Naive thymus-derived CD4-positive, alpha-beta T cell (primary cell): ENCODE measurements at regions of chr14 and their contacts with region 1.

Region 1: DNA sequence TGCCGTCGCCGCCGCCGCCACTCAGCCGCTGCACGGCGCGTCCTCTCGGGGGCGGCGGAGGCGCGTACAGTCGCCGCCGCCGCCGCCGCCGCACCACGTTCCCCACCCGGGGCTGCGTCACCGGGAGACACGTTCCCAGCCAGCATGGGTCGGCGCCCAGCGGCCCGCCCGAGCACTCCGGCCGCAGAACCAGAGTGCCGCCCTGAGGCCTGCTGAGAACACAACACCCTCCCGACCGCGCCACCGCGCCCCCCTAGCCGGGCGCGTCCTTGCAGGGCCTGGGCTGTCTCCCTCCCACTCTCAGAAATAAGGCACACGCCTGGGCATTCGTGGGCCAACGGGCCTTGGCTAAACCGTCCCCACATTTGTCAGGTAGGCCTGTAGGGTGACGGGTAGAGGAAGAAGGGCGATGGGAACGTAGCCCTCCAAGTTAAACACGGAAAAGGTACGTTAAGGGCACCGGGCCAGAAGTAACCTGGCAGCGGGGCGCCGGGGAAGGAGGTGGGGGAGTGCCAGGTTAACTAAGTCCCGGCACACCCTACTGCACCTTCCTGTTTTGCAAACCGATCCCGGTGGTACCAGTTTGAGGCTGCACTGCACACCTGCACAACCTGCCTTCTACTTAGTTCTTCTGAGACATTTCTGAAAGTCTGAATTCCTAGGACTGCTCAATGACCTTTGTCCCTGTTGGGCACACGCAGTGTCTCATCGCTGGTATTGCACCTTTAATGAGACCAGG is at the start of gene MAP4K5:
- DNase-seq: peak; percentile 76 to 90 (median 85)
- ATAC-seq: peak; percentile 97
- H3K4me3 ChIP-seq: peak within 1 kb of the TSS; percentile 50
- H3K4me3 Mint-ChIP-seq: peak within 1 kb of the TSS; percentile 82 to 93 (median 91)
- H3K27ac ChIP-seq: peak within 1 kb of the TSS; percentile 78
- H3K27ac Mint-ChIP-seq: peak within 1 kb of the TSS; percentile 64 to 96 (median 89)
- H3K4me1 ChIP-seq: peaks cover 16 to 24% of the 10 kb centered on the region in 2 donors
- H3K4me1 Mint-ChIP-seq: peaks cover 36 to 59% (median 46%) of the 10 kb centered on the region in 7 donors
- H3K27me3 ChIP-seq: no peaks in the 10 kb centered on the region
- H3K27me3 Mint-ChIP-seq: peaks cover 0 to 21% (median 0%) of the 10 kb centered on the region in 5 donors
- total RNA-seq, gene MAP4K5: 30.0 to 47.5 (median 35.1) TPM

Region 2: GRCh38 chr14:49585803-49586672 is 946.6 kb before region 1 on chr14 and contains the start of gene RPS29:
- CTCF ChIA-PET with region 1: no interaction called
- POLR2A ChIA-PET with region 1: no interaction called
- intact Hi-C with region 1: loop called (anchors 5 kb)
- DNase-seq: peak; percentile 97 to 99 (median 99)
- ATAC-seq: peak; percentile 91
- H3K4me3 ChIP-seq: peak within 1 kb of the TSS; percentile 98
- H3K4me3 Mint-ChIP-seq: peak within 1 kb of the TSS; percentile 87 to 100 (median 94)
- H3K27ac ChIP-seq: peak within 1 kb of the TSS; percentile 84
- H3K27ac Mint-ChIP-seq: peak within 1 kb of the TSS; percentile 90 to 100 (median 98)
- H3K4me1 ChIP-seq: peaks cover 19 to 21% of the 10 kb centered on the region in 2 donors
- H3K4me1 Mint-ChIP-seq: peaks cover 33 to 60% (median 46%) of the 10 kb centered on the region in 7 donors
- H3K27me3 ChIP-seq: no peaks in the 10 kb centered on the region
- H3K27me3 Mint-ChIP-seq: peaks cover 0 to 5% (median 0%) of the 10 kb centered on the region in 5 donors
- total RNA-seq, gene RPS29: 2,254 to 4,907 (median 2,729) TPM

Region 3: GRCh38 chr14:49828640-49829039 is 704.0 kb before region 1 on chr14:
- CTCF ChIA-PET with region 1: no interaction called
- POLR2A ChIA-PET with region 1: no interaction called
- intact Hi-C with region 1: loop called in 1 of 2 experiments (anchors 1 kb)
- DNase-seq: no peak
- ATAC-seq: no peak
- H3K4me3 ChIP-seq: no peak overlapping the region
- H3K4me3 Mint-ChIP-seq: no peak overlapping the region
- H3K27ac ChIP-seq: no peak overlapping the region
- H3K27ac Mint-ChIP-seq: peak overlapping the region in 1 of 9 donors; percentile 65
- H3K4me1 ChIP-seq: no peaks in the 10 kb centered on the region
- H3K4me1 Mint-ChIP-seq: peaks cover 0 to 24% (median 10%) of the 10 kb centered on the region in 7 donors
- H3K27me3 ChIP-seq: no peaks in the 10 kb centered on the region
- H3K27me3 Mint-ChIP-seq: no peaks in the 10 kb centered on the region

Region 4: DNA sequence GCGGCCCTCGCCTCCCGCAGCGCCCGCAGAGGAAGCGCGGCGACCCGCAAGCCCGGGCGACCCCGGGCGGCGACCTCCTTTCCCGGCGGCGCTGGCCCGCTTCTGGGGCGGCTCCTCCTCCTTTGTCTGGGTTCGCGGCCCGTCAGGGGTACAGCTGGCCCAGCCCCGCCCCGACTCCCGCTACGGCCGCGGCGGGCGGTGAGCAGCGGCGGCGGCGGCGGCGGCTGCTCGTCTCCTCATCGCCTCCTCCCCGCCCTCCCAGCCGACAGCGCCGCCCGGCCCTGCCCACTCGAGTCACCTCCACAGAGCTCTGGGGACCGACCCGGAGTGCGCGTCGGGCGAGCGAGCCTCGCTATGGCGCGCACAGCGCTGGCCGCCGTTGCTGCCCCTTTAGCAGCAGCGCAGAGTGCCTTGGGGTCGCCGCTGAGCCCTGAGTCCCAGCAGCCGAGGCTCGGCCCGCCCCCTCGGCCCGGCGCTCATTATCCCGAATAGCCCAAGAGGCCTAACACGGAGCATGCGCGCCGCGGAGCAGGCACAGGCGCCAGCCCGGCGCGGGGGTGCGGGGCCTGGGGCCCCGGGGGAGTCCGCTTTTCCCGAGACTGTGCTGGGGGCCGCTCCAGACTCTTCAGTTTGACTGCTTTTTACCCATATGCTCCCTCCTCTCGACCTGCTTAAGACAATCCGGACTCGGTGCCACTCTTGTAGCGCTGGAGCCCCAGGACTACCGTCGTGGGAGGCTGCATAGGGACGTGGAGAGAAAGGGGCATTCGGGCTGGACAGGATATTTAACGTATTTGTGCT is 301.0 kb before region 1 on chr14 and contains the start of gene SOS2:
- CTCF ChIA-PET with region 1: no interaction called
- POLR2A ChIA-PET with region 1: no interaction called
- intact Hi-C with region 1: loop called (anchors 1 kb)
- DNase-seq: peak; percentile 71 to 84 (median 80)
- ATAC-seq: peak; percentile 92
- H3K4me3 ChIP-seq: peak within 1 kb of the TSS; percentile 89
- H3K4me3 Mint-ChIP-seq: peak within 1 kb of the TSS; percentile 80 to 97 (median 91)
- H3K27ac ChIP-seq: peak within 1 kb of the TSS; percentile 81
- H3K27ac Mint-ChIP-seq: peak within 1 kb of the TSS; percentile 90 to 96 (median 95)
- H3K4me1 ChIP-seq: peaks cover 6 to 17% of the 10 kb centered on the region in 2 donors
- H3K4me1 Mint-ChIP-seq: peaks cover 19 to 47% (median 42%) of the 10 kb centered on the region in 7 donors
- H3K27me3 ChIP-seq: no peaks in the 10 kb centered on the region
- H3K27me3 Mint-ChIP-seq: no peaks in the 10 kb centered on the region
- total RNA-seq, gene SOS2: 19.7 to 49.6 (median 38.7) TPM

Region 5: DNA sequence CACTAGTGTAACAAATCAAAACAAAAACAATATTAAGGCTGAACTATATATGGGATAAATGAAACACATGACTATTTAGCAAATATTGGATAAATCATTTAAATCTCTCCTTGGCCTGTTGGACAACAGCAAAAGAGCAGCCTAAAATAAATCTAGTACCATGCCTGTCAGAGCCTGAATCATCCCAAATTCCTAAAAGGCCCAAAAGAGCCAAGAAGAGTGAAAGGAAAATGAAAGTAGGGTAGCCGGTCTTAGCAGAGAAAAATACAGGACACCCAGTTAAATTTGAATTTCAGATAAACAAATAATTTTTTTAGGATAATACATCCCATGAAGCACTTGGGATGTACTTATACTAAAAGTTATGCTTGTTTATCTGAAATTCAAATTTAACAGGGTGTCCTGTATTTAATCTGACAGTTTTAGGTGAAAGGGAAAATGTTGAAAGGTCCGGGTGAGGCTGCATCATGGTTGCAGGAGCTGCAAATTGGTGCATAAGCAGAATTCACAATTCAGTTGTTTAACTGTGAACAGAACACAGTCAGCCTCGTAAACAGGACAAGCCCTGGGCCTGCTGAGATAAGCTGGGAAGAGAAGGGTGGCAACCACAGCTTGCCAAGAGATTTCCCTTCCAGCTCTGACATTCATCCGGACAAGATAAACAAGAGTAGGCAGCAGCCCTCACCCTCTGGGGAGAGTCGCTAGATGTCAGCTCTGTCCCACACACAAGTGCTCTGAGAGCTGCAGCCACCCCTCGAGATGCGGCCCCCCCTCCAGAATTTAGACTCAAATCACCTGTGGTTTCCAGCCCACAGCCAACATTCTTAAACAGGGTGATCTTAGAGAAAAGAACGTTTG is 190.2 kb before region 1 on chr14:
- CTCF ChIA-PET with region 1: no interaction called
- POLR2A ChIA-PET with region 1: interaction called, 4 read pairs
- intact Hi-C with region 1: loop called (anchors 1 kb)
- DNase-seq: peak in 7 of 9 donors; percentile 22 to 59 (median 39)
- ATAC-seq: peak; percentile 83
- H3K4me3 ChIP-seq: no peak overlapping the region
- H3K4me3 Mint-ChIP-seq: peak overlapping the region in 1 of 10 donors; percentile 59
- H3K27ac ChIP-seq: no peak overlapping the region
- H3K27ac Mint-ChIP-seq: peak overlapping the region in 2 of 9 donors; percentile 31 to 66
- H3K4me1 ChIP-seq: no peaks in the 10 kb centered on the region
- H3K4me1 Mint-ChIP-seq: peaks cover 0 to 23% (median 16%) of the 10 kb centered on the region in 7 donors
- H3K27me3 ChIP-seq: no peaks in the 10 kb centered on the region
- H3K27me3 Mint-ChIP-seq: peaks cover 0 to 11% (median 0%) of the 10 kb centered on the region in 5 donors

Region 6: GRCh38 chr14:50667996-50668825 is 135.5 kb after region 1 on chr14 and contains the start of gene SAV1:
- CTCF ChIA-PET with region 1: no interaction called
- POLR2A ChIA-PET with region 1: no interaction called
- intact Hi-C with region 1: loop called in 1 of 2 experiments (anchors 5 kb)
- DNase-seq: peak; percentile 18 to 65 (median 35)
- ATAC-seq: peak; percentile 59
- H3K4me3 ChIP-seq: peak within 1 kb of the TSS; percentile 84
- H3K4me3 Mint-ChIP-seq: peak within 1 kb of the TSS in 2 of 10 donors; percentile 92 to 95
- H3K27ac ChIP-seq: peak within 1 kb of the TSS; percentile 65
- H3K27ac Mint-ChIP-seq: peak within 1 kb of the TSS in 6 of 9 donors; percentile 54 to 94 (median 88)
- H3K4me1 ChIP-seq: peaks cover 0 to 10% of the 10 kb centered on the region in 2 donors
- H3K4me1 Mint-ChIP-seq: peaks cover 11 to 23% (median 20%) of the 10 kb centered on the region in 7 donors
- H3K27me3 ChIP-seq: no peaks in the 10 kb centered on the region
- H3K27me3 Mint-ChIP-seq: peaks cover 0 to 7% (median 0%) of the 10 kb centered on the region in 5 donors
- total RNA-seq, gene SAV1: 7.2 to 9.4 (median 8.7) TPM